ENCODE measurements at regions of chr12 and their contacts with region 1.

Region 1: GRCh38 chr12:120783197-120783596 is 57.6 kb downstream of the ACADS start:
- DNase-seq: no peak
- ATAC-seq: no peak
- H3K4me3 ChIP-seq: no peak overlapping the region
- H3K27ac ChIP-seq: no peak overlapping the region
- H3K4me1 ChIP-seq: no peaks in the 10 kb centered on the region
- H3K27me3 ChIP-seq: no peaks in the 10 kb centered on the region
- CTCF ChIP-seq: no peak

Region 2: DNA sequence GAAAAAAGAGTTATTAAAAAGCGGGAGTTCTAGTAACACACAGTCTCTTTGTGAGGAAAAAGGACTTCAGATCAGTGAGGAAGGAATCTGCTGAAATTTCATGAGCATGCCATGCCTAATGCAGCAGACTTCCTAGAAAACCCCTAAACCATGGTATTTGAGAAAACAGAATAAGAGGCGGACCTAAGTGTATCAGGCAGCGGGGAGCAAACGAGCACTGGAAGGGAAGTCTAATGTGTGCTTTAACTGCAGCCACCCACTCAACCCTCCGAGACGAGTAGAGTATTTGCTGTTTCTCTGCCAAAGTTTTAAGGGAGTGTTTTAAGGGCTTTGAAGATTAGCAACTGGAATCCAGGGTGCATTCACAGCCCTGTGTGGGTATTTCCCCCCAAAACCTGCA is 21.1 kb before region 1 on chr12:
- CTCF ChIA-PET with region 1: no interaction called
- POLR2A ChIA-PET with region 1: no interaction called
- in situ Hi-C with region 1: no loop called
- intact Hi-C with region 1: loop called (anchors 2 kb)
- DNase-seq: no peak
- ATAC-seq: no peak
- H3K4me3 ChIP-seq: no peak overlapping the region
- H3K27ac ChIP-seq: no peak overlapping the region
- H3K4me1 ChIP-seq: no peaks in the 10 kb centered on the region
- H3K27me3 ChIP-seq: no peaks in the 10 kb centered on the region
- CTCF ChIP-seq: no peak

Region 3: DNA sequence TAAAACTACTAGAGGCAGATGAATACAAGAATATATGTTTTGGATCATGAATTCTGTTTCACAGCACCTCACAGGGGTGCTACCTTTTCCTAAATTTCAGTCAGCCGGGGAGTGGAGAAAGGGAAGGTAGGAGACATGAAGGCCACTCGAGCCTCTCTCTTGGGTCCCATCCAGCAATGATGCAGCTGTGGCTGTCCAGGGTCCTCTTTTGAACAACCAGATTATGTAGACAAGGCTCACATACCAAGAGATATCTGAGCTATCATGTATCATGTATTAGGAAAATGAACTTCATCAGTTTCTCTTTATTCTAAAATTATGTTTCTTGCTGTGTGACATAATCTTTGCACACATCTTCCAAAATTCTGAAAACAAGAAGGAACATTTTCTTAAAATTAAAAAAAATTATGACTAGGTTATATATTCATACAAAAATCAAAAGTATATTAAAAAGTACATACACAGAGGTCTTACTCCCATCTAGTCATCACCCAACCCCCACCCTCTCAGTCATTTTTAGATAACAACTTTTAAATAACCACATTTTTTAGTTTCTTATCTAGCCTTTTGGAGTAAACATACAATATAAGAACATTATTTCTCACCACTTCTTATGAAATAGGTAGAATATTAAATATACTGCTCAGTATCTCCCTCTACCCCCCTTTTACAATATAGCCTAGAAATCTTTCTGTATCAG is 31.2 kb after region 1 on chr12:
- CTCF ChIA-PET with region 1: interaction called, 3 read pairs
- POLR2A ChIA-PET with region 1: interaction called, 10 read pairs
- in situ Hi-C with region 1: no loop called
- intact Hi-C with region 1: no loop called
- DNase-seq: no peak
- ATAC-seq: no peak
- H3K4me3 ChIP-seq: no peak overlapping the region
- H3K27ac ChIP-seq: no peak overlapping the region
- H3K4me1 ChIP-seq: no peaks in the 10 kb centered on the region; the same call in 1 of the 2 replicates
- H3K27me3 ChIP-seq: no peaks in the 10 kb centered on the region
- CTCF ChIP-seq: no peak